Adrenal gland (tissue), 19 donors: ENCODE measurements at regions of chr12 and their contacts with region 1.

Region 1: DNA sequence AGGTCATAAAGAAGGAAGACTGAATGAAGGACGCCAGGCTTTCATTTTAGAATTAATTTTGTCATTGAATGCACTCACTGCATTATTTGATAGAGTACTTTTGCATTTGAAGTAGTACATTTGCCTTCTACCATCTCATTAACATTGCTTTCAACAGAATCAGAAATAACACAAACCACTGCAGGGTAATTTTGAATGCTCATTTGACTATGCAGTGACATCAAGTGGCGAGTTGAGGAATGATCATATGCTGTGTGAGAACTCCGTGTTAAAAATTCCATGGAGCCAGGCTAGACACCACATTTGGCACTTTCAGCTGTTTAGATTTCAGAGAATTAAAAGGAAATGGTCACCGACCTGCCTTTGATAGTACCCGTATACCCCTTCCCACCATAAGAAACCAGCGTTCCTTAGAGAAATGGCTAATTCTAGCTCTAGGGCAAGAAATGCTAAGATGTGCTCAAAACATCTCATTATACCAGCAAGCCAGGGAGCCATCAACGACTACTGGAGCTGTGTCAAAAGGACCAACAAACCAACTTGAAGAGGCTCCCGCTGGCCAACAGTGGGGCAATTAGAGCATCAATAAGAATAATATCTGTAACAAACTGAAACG is 16.5 kb downstream of the HEBP1 start:
- DNase-seq: peak in 4 of 7 donors; percentile 26 to 47 (median 37)
- H3K4me3 ChIP-seq: no peak overlapping the region
- H3K27ac ChIP-seq: no peak overlapping the region
- H3K4me1 ChIP-seq: no peaks in the 10 kb centered on the region
- H3K27me3 ChIP-seq: no peaks in the 10 kb centered on the region
- CTCF ChIP-seq: peak; percentile 25 to 64 (median 56)
- POLR2A ChIP-seq: no peak

Region 2: GRCh38 chr12:12837025-12837872 is 146.3 kb before region 1 on chr12:
- intact Hi-C with region 1: loop called in 1 of 2 experiments (anchors 10 kb)
- DNase-seq: peak; percentile 26 to 77 (median 63)
- H3K4me3 ChIP-seq: no peak overlapping the region
- H3K27ac ChIP-seq: peak overlapping the region in 1 of 5 donors; percentile 41
- H3K4me1 ChIP-seq: peaks cover 0 to 8% of the 10 kb centered on the region in 2 donors
- H3K27me3 ChIP-seq: no peaks in the 10 kb centered on the region
- CTCF ChIP-seq: peak; percentile 44 to 73 (median 60)
- POLR2A ChIP-seq: no peak